Prostate gland (tissue), 2 donors: ENCODE measurements at regions of chr6 and their contacts with region 1.

Region 1: GRCh38 chr6:29737707-29738630 is 14.7 kb downstream of the HLA-F start:
- DNase-seq: peak; percentile 74
- H3K4me3 ChIP-seq: no peak overlapping the region
- H3K27ac ChIP-seq: no peak overlapping the region
- H3K4me1 ChIP-seq: no peaks in the 10 kb centered on the region
- H3K27me3 ChIP-seq: no peaks in the 10 kb centered on the region
- CTCF ChIP-seq: peak; percentile 24 to 78 (median 70)
- POLR2A ChIP-seq: no peak

Region 2: GRCh38 chr6:29388533-29388932 is 349.4 kb before region 1 on chr6:
- intact Hi-C with region 1: no loop called
- DNase-seq: no peak
- H3K4me3 ChIP-seq: no peak overlapping the region
- H3K27ac ChIP-seq: no peak overlapping the region
- H3K4me1 ChIP-seq: no peaks in the 10 kb centered on the region
- H3K27me3 ChIP-seq: no peaks in the 10 kb centered on the region
- CTCF ChIP-seq: no peak
- POLR2A ChIP-seq: no peak

Region 3: GRCh38 chr6:29834564-29835436 is 96.8 kb after region 1 on chr6:
- intact Hi-C with region 1: loop called (anchors 2 kb)
- DNase-seq: no peak
- H3K4me3 ChIP-seq: no peak overlapping the region
- H3K27ac ChIP-seq: no peak overlapping the region
- H3K4me1 ChIP-seq: no peaks in the 10 kb centered on the region
- H3K27me3 ChIP-seq: no peaks in the 10 kb centered on the region
- CTCF ChIP-seq: peak; percentile 47 to 87 (median 78)
- POLR2A ChIP-seq: no peak